Right ventricle myocardium inferior (tissue), 1 donor: ENCODE measurements at regions of chr15 and their contacts with region 1.

Region 1: DNA sequence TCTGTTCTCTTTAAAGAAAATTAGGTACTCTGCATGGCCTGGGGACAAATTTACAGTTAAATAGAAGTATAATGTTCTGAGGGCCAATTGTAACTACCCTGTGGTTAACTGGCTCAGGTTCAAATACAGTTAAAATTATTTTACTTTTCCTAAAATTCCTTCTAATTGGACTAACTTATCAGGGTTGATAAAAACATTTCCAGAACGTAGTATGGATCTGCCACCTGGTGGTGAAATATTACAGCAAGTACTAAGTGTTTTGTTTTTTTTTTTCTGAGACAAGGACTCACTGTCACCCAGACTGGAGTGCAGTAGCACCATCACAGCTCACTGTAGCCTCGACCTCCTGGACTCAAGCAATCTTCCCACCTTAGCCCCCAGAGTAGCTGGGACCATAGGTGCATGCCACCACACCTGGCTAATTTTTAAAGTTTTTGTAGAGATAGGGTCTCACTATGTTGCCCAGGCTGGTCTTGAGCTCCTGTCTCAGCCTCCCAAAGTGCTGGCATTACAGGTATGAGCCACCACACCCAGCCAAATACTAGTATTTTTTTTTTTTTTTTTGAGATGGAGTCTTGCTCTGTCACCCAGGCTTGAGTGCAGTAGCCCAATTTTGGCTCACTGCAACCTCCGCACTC is 29.2 kb downstream of the NEO1 start:
- DNase-seq: no peak
- ATAC-seq: no peak

Region 2: DNA sequence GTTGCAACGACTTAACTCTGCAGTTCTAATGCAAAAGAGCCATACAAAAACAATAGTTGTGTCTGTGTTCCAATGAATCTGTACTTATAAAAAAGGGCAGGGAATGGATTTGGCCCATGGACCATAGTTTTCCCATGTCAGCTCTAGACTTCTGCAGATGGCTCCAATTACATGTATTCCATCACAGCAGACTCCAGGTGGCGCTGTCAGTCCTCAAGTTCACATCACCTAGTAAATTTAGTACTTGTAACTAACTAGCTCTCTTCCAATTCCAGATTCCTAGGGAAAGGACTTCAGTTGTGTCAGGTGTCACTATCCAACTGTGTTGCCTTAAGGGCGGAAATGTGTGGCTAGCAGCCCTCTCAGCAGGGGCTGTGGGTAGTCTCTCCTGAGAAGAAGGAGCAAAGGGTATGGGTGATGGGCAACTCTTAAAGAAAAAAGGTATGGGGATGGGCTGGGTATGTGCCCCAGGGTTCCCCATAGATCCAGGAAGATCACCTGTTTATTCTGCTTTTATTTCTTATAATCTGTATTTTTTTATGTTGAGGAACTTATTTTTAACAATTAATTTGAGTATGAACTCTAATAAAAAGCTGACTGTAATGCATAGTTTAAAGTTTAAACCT is 359.3 kb before region 1 on chr15:
- intact Hi-C with region 1: loop called (anchors 5 kb)
- DNase-seq: no peak
- ATAC-seq: peak; percentile 39

Region 3: DNA sequence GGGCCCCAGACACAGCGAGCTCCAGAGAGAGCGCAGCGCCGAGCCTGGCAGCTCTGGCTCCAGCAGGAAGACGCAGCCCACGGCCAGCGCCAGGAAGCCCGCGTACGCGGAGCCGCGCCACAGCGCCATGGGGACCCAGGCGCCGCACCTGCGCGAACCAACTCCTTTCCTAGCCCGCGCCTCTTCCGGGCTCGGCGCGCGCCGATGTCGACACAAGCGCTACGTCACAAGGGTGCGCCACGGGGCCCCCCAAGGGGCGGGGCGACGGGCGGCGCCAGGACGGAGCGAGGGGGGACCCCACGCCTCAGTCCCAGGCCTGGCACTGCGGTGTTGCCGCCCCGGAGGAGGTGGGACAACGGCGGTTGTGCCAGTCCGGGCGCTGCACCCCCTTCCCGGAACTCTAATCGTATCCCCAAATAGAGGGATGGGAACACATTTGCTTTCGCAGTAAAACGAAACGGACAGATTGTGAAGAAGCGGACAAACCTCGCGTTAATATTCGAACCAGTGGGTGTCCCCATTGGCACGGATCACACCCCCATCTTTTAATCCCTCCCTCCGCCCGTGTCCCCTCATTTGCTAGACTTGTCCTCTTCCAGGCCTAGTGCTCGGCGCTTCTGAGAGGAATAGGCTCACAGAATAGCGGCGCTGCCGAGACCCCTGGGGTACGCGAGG is 297.7 kb before region 1 on chr15 and contains the start of gene ADPGK:
- intact Hi-C with region 1: loop called (anchors 5 kb)
- DNase-seq: peak; percentile 95
- ATAC-seq: peak; percentile 97
- total RNA-seq, gene ADPGK: 11.4 TPM

Region 4: DNA sequence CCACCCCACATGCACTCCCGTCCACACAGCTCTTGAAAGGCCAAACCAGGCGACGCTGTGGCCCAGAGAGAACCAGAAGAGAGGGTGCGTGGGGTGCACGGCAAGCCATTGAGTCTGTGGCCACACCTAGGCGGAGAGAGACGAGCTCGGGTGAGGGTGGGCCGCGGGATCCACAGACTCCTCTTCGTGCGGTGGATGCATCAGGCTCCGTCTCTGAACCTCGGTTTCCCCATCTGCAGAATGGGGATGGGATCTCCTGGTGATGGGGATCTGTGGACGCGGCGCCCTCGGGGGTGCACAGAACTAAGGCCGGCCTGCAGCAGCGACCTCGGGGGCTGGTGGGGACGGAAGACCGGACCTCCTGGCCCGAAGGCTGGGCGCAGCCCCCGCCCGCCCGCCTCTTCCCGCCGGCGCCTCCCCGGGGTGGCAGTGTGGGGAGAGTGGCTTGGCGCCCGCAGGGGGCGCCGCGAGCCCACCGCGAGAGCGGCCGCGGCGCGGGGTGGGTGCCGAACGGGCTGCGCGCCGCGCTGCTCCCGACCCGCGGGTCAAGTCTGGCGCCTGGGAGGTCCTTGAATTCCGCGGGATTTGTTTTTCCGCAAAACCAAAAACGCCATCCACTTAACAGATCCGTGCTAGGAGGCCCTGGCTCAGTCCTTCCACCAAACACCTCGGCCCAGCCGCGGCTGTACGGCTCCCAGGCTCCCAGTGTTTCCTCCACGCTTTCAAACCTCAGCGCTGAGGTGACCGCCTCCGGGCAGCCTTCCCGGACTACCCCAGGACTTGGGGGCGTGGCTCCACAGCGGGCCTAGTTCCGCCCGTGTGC is 284.7 kb before region 1 on chr15:
- intact Hi-C with region 1: loop called (anchors 2 kb)
- DNase-seq: peak; percentile 78
- ATAC-seq: peak; percentile 89

Region 5: GRCh38 chr15:73284090-73284716 is 202.8 kb after region 1 on chr15:
- intact Hi-C with region 1: no loop called
- DNase-seq: no peak
- ATAC-seq: no peak